Colonic mucosa (tissue), 4 donors: ENCODE measurements at regions of chr11 and their contacts with region 1.

Region 1: DNA sequence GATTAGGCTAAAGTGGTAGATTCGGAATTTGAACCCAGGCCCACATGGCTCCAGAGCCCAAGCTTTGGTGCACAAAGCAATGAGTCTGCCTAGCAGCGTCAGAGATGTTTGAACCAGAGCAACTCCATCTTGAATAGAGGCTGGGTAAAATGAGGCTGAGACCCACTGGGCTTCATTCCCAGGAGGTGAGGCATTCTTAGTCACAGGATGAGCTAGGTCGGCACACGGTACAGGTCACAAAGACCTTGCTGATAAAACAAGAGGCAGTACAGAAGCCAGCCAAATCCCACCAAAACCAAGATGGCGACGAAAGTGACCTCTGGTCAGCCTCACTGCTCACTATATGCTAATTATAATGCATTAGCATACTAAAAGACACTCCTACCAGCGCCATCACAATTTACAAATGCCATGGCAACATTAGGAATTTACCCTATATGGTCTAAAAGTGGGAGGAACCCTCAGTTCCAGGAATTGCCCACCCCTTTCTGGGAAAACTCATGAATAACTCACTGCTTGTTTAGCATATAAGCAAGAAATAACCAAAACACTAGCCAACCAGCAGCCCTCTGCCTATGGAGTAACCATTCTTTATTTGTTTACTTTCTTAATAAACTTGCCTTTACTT is 40.3 kb upstream of the DAGLA start:
- DNase-seq: no peak
- H3K4me3 ChIP-seq: no peak overlapping the region
- H3K27ac ChIP-seq: no peak overlapping the region
- H3K4me1 ChIP-seq: no peaks in the 10 kb centered on the region
- H3K27me3 ChIP-seq: no peaks in the 10 kb centered on the region
- CTCF ChIP-seq: no peak

Region 2: DNA sequence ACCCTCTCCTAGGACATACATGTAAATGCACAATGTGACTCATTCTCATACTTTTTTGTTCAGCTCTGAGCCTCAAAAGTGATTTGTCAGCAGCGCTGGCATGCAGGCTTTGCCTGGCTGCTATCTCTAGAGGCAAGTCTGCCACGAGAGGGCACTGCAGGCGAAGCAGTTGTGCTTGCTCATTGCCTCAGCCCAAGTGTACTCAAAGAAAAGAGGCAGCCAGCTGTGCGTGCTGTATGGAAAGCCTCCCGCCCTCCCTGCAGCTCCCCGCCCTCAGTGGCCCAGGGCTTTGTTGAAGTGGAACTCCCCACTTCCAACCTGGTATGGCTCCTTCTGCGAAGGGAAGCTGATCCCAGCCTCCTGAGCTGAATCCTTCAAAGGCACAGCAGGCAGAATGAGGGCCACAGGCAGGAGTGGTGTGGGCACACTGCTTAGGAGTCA is 193.7 kb before region 1 on chr11:
- intact Hi-C with region 1: loop called (anchors 10 kb)
- DNase-seq: peak; percentile 90
- H3K4me3 ChIP-seq: no peak overlapping the region
- H3K27ac ChIP-seq: no peak overlapping the region
- H3K4me1 ChIP-seq: no peaks in the 10 kb centered on the region
- H3K27me3 ChIP-seq: no peaks in the 10 kb centered on the region
- CTCF ChIP-seq: peak; percentile 77

Region 3: DNA sequence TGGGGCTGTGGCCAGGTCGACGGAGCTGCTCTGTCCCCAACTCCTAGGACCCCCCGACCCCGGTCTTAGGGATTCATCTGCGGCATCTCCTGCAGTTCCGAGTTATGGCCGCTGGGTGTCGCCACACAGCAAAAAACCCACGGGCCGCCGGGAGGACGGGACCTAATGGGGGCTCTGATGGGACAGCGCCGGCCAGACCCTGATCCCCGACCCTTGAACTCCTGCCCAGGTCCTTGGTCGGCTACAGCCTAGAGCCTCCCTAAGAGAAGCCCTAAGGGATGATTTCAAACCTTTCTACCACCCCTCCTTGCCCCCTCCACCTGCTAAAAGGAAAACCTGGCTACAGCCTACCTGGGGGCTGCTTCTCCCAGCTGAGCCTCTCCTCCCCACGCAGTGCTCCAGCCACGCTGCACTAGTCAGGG is 162.2 kb before region 1 on chr11:
- intact Hi-C with region 1: loop called (anchors 5 kb)
- DNase-seq: peak; percentile 54
- H3K4me3 ChIP-seq: no peak overlapping the region
- H3K27ac ChIP-seq: no peak overlapping the region
- H3K4me1 ChIP-seq: no peaks in the 10 kb centered on the region
- H3K27me3 ChIP-seq: no peaks in the 10 kb centered on the region
- CTCF ChIP-seq: peak; percentile 95

Region 4: DNA sequence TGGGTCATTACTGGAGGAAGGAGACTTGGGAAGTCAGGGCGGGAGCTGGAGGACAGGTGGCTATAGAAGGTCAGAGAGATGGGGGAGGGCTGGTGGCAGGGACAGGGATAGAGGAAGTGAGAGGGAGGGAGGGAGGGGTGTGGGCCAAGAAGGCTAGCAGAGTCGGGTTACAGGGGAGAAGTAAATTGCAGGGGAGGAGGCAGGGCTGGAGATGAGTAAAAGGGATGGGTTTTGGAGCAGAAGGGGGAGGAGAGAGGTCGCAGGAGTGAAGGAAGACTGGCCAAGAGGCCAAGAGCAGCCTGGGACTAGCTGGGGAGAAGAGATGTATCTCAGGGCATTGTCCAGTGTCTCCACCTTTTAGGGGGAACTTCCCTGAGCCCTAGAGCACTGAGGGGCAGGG is 98.3 kb before region 1 on chr11:
- intact Hi-C with region 1: no loop called
- DNase-seq: no peak
- H3K4me3 ChIP-seq: no peak overlapping the region
- H3K27ac ChIP-seq: no peak overlapping the region
- H3K4me1 ChIP-seq: no peaks in the 10 kb centered on the region
- H3K27me3 ChIP-seq: no peaks in the 10 kb centered on the region
- CTCF ChIP-seq: no peak